Posterior vena cava (tissue), 2 donors: ENCODE measurements at regions of chr2 and their contacts with region 1.

Region 1: GRCh38 chr2:215767625-215768024 is 245.7 kb downstream of the MREG start:
- DNase-seq: no peak

Region 2: GRCh38 chr2:215644233-215644897 is 123.3 kb before region 1 on chr2:
- intact Hi-C with region 1: no loop called
- DNase-seq: no peak

Region 3: GRCh38 chr2:215753808-215754207 is 13.8 kb before region 1 on chr2:
- intact Hi-C with region 1: loop called in 1 of 2 experiments (anchors 1 kb)
- DNase-seq: no peak